Caco-2 (cell line): ENCODE measurements at regions of chr16 and their contacts with region 1.

Region 1: DNA sequence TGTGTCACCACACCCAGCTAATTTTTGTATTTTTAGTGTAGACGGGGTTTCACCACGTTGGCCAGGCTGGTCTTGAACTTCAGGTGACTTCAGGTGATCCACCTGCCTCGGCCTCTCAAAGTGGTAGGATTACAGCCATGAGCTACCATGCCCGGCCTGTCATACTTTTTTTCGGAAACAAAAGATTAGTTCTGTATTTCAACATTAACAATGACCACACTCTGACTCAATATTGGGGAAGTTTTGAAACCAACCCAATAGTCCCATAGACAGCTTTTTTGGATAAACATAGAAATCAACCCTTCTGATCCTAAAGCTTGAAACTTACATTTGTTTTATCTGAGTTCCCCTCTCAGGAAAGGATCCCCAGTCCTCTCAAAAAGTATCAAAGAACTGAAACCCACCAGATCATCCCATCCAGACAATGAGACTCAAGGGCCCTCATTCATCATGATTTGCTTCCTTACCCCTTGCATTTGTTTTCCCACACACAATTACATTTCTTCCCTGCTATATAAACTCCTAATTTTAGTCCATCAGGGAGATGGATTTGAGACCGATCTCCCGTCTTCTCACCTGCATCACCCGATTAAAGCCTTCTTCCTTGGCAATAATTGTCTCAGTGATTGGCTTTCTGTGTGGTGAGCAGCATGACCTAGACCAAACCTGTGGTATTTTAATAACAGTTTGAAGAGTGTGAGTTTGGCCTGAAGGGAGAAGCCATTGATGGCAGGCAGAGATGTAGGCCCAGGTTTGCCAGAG is 7.2 kb upstream of the AGRP start:
- DNase-seq: no peak
- H3K4me3 ChIP-seq: no peak overlapping the region
- H3K4me3 Mint-ChIP-seq: no peak overlapping the region
- H3K27ac Mint-ChIP-seq: no peak overlapping the region
- H3K4me1 ChIP-seq: peaks cover 22% of the 10 kb centered on the region
- H3K4me1 Mint-ChIP-seq: peaks cover 23% of the 10 kb centered on the region
- H3K27me3 ChIP-seq: no peaks in the 10 kb centered on the region
- H3K27me3 Mint-ChIP-seq: no peaks in the 10 kb centered on the region
- CTCF ChIP-seq: no peak

Region 2: GRCh38 chr16:67595033-67595355 is 104.5 kb after region 1 on chr16:
- CTCF ChIA-PET with region 1: no interaction called
- POLR2A ChIA-PET with region 1: no interaction called
- intact Hi-C with region 1: no loop called
- DNase-seq: no peak
- H3K4me3 ChIP-seq: no peak overlapping the region
- H3K4me3 Mint-ChIP-seq: no peak overlapping the region
- H3K27ac Mint-ChIP-seq: no peak overlapping the region
- H3K4me1 ChIP-seq: peaks cover 4% of the 10 kb centered on the region; the same call in 1 of the 2 replicates
- H3K4me1 Mint-ChIP-seq: peaks cover 8% of the 10 kb centered on the region
- H3K27me3 ChIP-seq: no peaks in the 10 kb centered on the region
- H3K27me3 Mint-ChIP-seq: no peaks in the 10 kb centered on the region
- CTCF ChIP-seq: no peak

Region 3: GRCh38 chr16:67857502-67858233 is 367.2 kb after region 1 on chr16:
- CTCF ChIA-PET with region 1: interaction called, 10 read pairs
- POLR2A ChIA-PET with region 1: no interaction called
- intact Hi-C with region 1: no loop called
- DNase-seq: peak; percentile 86 to 91
- H3K4me3 ChIP-seq: no peak overlapping the region
- H3K4me3 Mint-ChIP-seq: peak overlapping the region; percentile 22
- H3K27ac Mint-ChIP-seq: peak overlapping the region; percentile 90
- H3K4me1 ChIP-seq: peaks cover 21% of the 10 kb centered on the region
- H3K4me1 Mint-ChIP-seq: peaks cover 31% of the 10 kb centered on the region
- H3K27me3 ChIP-seq: no peaks in the 10 kb centered on the region
- H3K27me3 Mint-ChIP-seq: no peaks in the 10 kb centered on the region
- CTCF ChIP-seq: no peak